ENCODE measurements at regions of chr15 and their contacts with region 1.

Region 1: GRCh38 chr15:47523681-47524475 is 193.4 kb upstream of the SEMA6D start:
- DNase-seq: peak; percentile 80
- ATAC-seq: peak; percentile 86
- H3K4me3 ChIP-seq: no peak overlapping the region
- H3K27ac ChIP-seq: no peak overlapping the region
- H3K4me1 ChIP-seq: peaks cover 3% of the 10 kb centered on the region
- H3K27me3 ChIP-seq: no peaks in the 10 kb centered on the region
- CTCF ChIP-seq: no peak
- POLR2A ChIP-seq: no peak
- RAD21 ChIP-seq: no peak

Region 2: DNA sequence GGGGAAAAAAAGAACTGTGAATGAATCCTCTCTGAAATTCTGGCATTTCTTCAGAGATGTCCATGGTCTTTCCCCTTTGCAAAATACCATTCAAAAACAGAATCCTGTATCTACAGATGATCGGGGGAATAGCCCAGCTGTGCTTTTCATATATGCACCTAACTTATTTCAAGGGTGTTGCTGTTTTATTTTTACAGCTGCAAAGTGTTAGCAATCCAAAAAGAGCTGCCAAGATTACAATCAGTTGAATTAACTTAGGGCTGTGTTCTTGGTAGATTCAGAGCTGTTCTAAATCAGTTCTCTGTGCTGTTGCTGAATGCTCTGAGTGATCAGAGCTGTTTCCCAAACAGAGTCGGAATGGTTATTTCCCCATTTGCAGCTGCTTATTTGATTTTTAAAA is 17.7 kb after region 1 on chr15:
- CTCF ChIA-PET with region 1: no interaction called
- POLR2A ChIA-PET with region 1: no interaction called
- dilution Hi-C with region 1: no loop called
- in situ Hi-C with region 1: no loop called
- intact Hi-C with region 1: loop called (anchors 2 kb)
- DNase-seq: no peak
- ATAC-seq: no peak
- H3K4me3 ChIP-seq: no peak overlapping the region
- H3K27ac ChIP-seq: no peak overlapping the region
- H3K4me1 ChIP-seq: no peaks in the 10 kb centered on the region
- H3K27me3 ChIP-seq: no peaks in the 10 kb centered on the region; the same call in 1 of the 2 replicates
- CTCF ChIP-seq: no peak
- POLR2A ChIP-seq: no peak
- RAD21 ChIP-seq: no peak

Measured in IMR-90 (cell line).